ENCODE measurements at regions of chr1 and their contacts with region 1.

Region 1: DNA sequence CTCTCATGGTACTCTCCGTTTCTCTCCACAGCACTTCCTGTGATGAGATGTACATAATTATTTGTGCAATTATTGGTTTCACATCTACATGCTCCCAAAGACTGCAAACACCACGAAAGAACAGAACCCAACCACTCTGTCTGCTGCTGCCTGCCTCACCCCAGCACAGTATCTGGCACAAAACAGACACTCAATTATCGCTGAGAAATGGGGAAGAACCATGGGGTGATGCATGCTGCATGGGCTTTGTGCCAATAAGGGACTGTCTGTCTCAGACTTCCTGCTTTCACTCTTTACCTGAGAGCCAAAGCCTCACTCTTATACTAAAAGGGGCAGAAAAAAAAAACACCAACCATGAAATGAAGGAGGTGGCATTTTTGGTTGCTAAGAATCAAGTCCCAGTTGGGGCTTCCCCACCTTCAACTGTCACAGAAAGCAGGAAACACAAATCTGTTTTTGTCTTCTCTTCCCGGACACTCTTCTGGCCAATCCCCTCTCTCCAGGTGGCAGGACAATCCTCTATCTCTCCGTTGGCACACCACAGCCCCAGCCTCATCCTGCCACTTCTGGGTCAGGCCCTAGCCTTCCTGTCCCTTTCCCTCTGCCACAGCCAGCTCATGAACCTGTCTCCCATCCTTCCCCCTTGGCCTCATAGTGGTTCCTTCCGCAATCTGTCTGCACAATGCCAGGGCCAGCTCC is 82.0 kb downstream of the TGFBR3 start:
- DNase-seq: peak; percentile 45 to 96 (median 77)
- ATAC-seq: peak; percentile 55
- H3K4me3 ChIP-seq: peak overlapping the region; percentile 37 to 51
- H3K4me3 Mint-ChIP-seq: peak overlapping the region; percentile 70
- H3K27ac ChIP-seq: peak overlapping the region; percentile 98 to 99
- H3K27ac Mint-ChIP-seq: peak overlapping the region; percentile 97
- H3K4me1 ChIP-seq: peaks cover 34% of the 10 kb centered on the region
- H3K4me1 Mint-ChIP-seq: peaks cover 52% of the 10 kb centered on the region
- H3K27me3 ChIP-seq: no peaks in the 10 kb centered on the region
- H3K27me3 Mint-ChIP-seq: no peaks in the 10 kb centered on the region
- CTCF ChIP-seq: no peak

Region 2: GRCh38 chr1:91500756-91501522 is 303.1 kb before region 1 on chr1 and contains the start of gene CDC7:
- CTCF ChIA-PET with region 1: no interaction called
- POLR2A ChIA-PET with region 1: interaction called, 3 read pairs
- intact Hi-C with region 1: loop called in 1 of 2 experiments (anchors 2 kb)
- DNase-seq: peak; percentile 56 to 92 (median 85)
- ATAC-seq: peak; percentile 83
- H3K4me3 ChIP-seq: peak within 1 kb of the TSS; percentile 88 to 98
- H3K4me3 Mint-ChIP-seq: no peak within 1 kb of the TSS
- H3K27ac ChIP-seq: peak within 1 kb of the TSS; percentile 58 to 86
- H3K27ac Mint-ChIP-seq: no peak within 1 kb of the TSS
- H3K4me1 ChIP-seq: peaks cover 10% of the 10 kb centered on the region
- H3K4me1 Mint-ChIP-seq: peaks cover 21% of the 10 kb centered on the region
- H3K27me3 ChIP-seq: no peaks in the 10 kb centered on the region
- H3K27me3 Mint-ChIP-seq: no peaks in the 10 kb centered on the region
- CTCF ChIP-seq: no peak
- total RNA-seq, gene CDC7: 2.2 to 2.7 TPM

Region 3: GRCh38 chr1:91622616-91623015 is 181.4 kb before region 1 on chr1:
- CTCF ChIA-PET with region 1: no interaction called
- POLR2A ChIA-PET with region 1: no interaction called
- intact Hi-C with region 1: no loop called
- DNase-seq: no peak
- ATAC-seq: no peak
- H3K4me3 ChIP-seq: no peak overlapping the region
- H3K4me3 Mint-ChIP-seq: no peak overlapping the region
- H3K27ac ChIP-seq: no peak overlapping the region
- H3K27ac Mint-ChIP-seq: no peak overlapping the region
- H3K4me1 ChIP-seq: no peaks in the 10 kb centered on the region
- H3K4me1 Mint-ChIP-seq: no peaks in the 10 kb centered on the region
- H3K27me3 ChIP-seq: no peaks in the 10 kb centered on the region
- H3K27me3 Mint-ChIP-seq: no peaks in the 10 kb centered on the region
- CTCF ChIP-seq: no peak

Region 4: GRCh38 chr1:91732291-91733107 is 71.5 kb before region 1 on chr1:
- CTCF ChIA-PET with region 1: no interaction called
- POLR2A ChIA-PET with region 1: no interaction called
- intact Hi-C with region 1: loop called in 1 of 2 experiments (anchors 5 kb)
- DNase-seq: peak in 3 of 9 experiments; percentile 25 to 70 (median 42)
- ATAC-seq: peak; percentile 41
- H3K4me3 ChIP-seq: no peak overlapping the region
- H3K4me3 Mint-ChIP-seq: no peak overlapping the region
- H3K27ac ChIP-seq: peak overlapping the region in 1 of 2 experiments; percentile 75
- H3K27ac Mint-ChIP-seq: peak overlapping the region; percentile 37
- H3K4me1 ChIP-seq: peaks cover 32% of the 10 kb centered on the region
- H3K4me1 Mint-ChIP-seq: peaks cover 51% of the 10 kb centered on the region
- H3K27me3 ChIP-seq: no peaks in the 10 kb centered on the region
- H3K27me3 Mint-ChIP-seq: no peaks in the 10 kb centered on the region
- CTCF ChIP-seq: no peak

Region 5: GRCh38 chr1:91885716-91886506 is 81.9 kb after region 1 on chr1 and contains the start of gene TGFBR3:
- CTCF ChIA-PET with region 1: no interaction called
- POLR2A ChIA-PET with region 1: interaction called, 4 read pairs
- intact Hi-C with region 1: loop called (anchors 1 to 2 kb)
- DNase-seq: peak; percentile 56 to 89 (median 83)
- ATAC-seq: peak; percentile 77
- H3K4me3 ChIP-seq: peak within 1 kb of the TSS; percentile 61 to 71
- H3K4me3 Mint-ChIP-seq: peak within 1 kb of the TSS; percentile 94
- H3K27ac ChIP-seq: peak within 1 kb of the TSS; percentile 40 to 63
- H3K27ac Mint-ChIP-seq: peak within 1 kb of the TSS; percentile 91
- H3K4me1 ChIP-seq: peaks cover 12% of the 10 kb centered on the region
- H3K4me1 Mint-ChIP-seq: peaks cover 31% of the 10 kb centered on the region
- H3K27me3 ChIP-seq: no peaks in the 10 kb centered on the region
- H3K27me3 Mint-ChIP-seq: no peaks in the 10 kb centered on the region
- CTCF ChIP-seq: no peak
- total RNA-seq, gene TGFBR3: 36.7 to 37.9 TPM

Region 6: DNA sequence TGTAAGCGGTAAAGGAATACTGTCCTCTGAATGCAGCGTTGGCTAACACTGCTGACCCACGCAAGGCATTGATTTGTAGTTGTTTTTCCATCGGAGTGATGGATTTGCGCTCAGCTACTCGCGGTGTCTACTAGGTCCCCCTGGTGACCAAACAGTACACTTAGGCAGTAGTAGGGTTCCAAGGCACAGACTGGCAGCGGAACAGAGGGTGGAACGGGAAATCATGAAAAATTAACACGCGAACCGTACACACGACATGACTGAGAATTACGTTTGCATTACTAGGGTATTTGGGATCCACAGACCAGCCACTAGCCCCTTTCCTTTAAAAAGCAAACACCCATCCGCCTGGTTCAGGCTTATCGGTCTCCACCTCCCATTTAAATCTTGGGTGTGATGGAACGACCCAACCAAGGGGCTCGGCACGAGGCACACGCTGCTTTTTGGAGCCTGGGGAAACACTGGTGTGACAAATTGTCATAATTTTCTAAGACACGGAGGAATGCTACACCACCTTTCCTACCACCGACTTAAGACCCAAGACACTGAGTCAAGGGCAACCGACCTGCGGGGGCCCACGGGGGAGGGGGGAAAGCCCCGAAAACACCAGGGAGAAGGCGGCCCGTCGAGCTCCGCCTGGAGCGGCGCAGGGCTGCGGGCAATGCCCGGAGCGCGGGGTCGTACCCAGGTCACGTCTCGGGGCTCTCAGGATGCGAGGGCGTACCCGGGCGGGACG is 1156.6 kb after region 1 on chr1:
- CTCF ChIA-PET with region 1: no interaction called
- POLR2A ChIA-PET with region 1: no interaction called
- intact Hi-C with region 1: loop called (anchors 5 to 10 kb)
- DNase-seq: peak; percentile 40 to 90 (median 62)
- ATAC-seq: peak; percentile 41
- H3K4me3 ChIP-seq: peak overlapping the region; percentile 81 to 82
- H3K4me3 Mint-ChIP-seq: peak overlapping the region; percentile 92
- H3K27ac ChIP-seq: peak overlapping the region; percentile 85 to 87
- H3K27ac Mint-ChIP-seq: peak overlapping the region; percentile 96
- H3K4me1 ChIP-seq: peaks cover 57% of the 10 kb centered on the region
- H3K4me1 Mint-ChIP-seq: peaks cover 40% of the 10 kb centered on the region
- H3K27me3 ChIP-seq: no peaks in the 10 kb centered on the region
- H3K27me3 Mint-ChIP-seq: no peaks in the 10 kb centered on the region
- CTCF ChIP-seq: peak; percentile 58